Activated T-helper 2 cell treated with anti-CD3 and anti-CD28 coated beads, Interferon-gamma antibody, Interleukin-2, Interleukin-4, amounts not matched to agents 10 μg/mL and 5 μg/mL and 100 μg/mL, durations not matched to agents 14 hours and 24 hours and 36 hours (primary cell): ENCODE measurements at regions of chr14 and their contacts with region 1.

Region 1: GRCh38 chr14:60248697-60249318 is at the start of gene PPM1A:
- DNase-seq: peak; percentile 91
- H3K4me3 Mint-ChIP-seq: peak within 1 kb of the TSS; percentile 95
- H3K27ac Mint-ChIP-seq: peak within 1 kb of the TSS; percentile 100
- H3K4me1 Mint-ChIP-seq: peaks cover 47% of the 10 kb centered on the region
- H3K27me3 Mint-ChIP-seq: no peaks in the 10 kb centered on the region
- total RNA-seq, gene PPM1A: 45.7 and 48.2 TPM in 2 replicates

Region 2: GRCh38 chr14:59189786-59190771 is 1058.7 kb before region 1 on chr14:
- intact Hi-C with region 1: loop called (anchors 2 kb)
- DNase-seq: peak; percentile 79
- H3K4me3 Mint-ChIP-seq: peak overlapping the region; percentile 95
- H3K27ac Mint-ChIP-seq: peak overlapping the region; percentile 61
- H3K4me1 Mint-ChIP-seq: peaks cover 17% of the 10 kb centered on the region
- H3K27me3 Mint-ChIP-seq: peaks cover 13% of the 10 kb centered on the region

Region 3: GRCh38 chr14:60164712-60165546 is 83.9 kb before region 1 on chr14 and contains the start of gene DHRS7:
- intact Hi-C with region 1: loop called (anchors 2 kb)
- DNase-seq: peak; percentile 58
- H3K4me3 Mint-ChIP-seq: peak within 1 kb of the TSS; percentile 94
- H3K27ac Mint-ChIP-seq: peak within 1 kb of the TSS; percentile 95
- H3K4me1 Mint-ChIP-seq: peaks cover 25% of the 10 kb centered on the region
- H3K27me3 Mint-ChIP-seq: no peaks in the 10 kb centered on the region
- total RNA-seq, gene DHRS7: 52.9 and 55.8 TPM in 2 replicates

Region 4: GRCh38 chr14:60204843-60205774 is 43.7 kb before region 1 on chr14:
- intact Hi-C with region 1: loop called (anchors 5 kb)
- DNase-seq: no peak
- H3K4me3 Mint-ChIP-seq: no peak overlapping the region
- H3K27ac Mint-ChIP-seq: no peak overlapping the region
- H3K4me1 Mint-ChIP-seq: peaks cover 19% of the 10 kb centered on the region
- H3K27me3 Mint-ChIP-seq: peaks cover 10% of the 10 kb centered on the region

Region 5: DNA sequence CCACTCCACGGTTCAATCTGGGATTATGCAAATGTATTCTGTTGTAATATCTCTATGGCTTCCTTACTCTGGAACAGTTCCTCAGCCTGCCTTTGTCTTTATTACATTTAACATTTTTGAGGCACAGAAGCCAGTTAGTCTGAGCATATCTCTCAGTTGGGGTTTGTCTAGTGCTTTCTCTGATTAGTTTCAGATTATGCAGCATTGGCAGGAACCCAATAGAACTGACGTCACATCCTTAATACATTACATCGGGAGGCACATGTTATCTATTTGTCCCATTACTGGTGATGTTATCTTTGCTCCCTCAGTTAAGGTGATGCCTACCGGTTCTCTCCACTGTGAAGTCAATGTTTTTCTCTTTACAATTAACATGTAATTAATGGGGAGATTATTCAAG is 62.6 kb after region 1 on chr14:
- intact Hi-C with region 1: no loop called
- DNase-seq: no peak
- H3K4me3 Mint-ChIP-seq: no peak overlapping the region
- H3K27ac Mint-ChIP-seq: no peak overlapping the region
- H3K4me1 Mint-ChIP-seq: no peaks in the 10 kb centered on the region
- H3K27me3 Mint-ChIP-seq: peaks cover 10% of the 10 kb centered on the region

Region 6: DNA sequence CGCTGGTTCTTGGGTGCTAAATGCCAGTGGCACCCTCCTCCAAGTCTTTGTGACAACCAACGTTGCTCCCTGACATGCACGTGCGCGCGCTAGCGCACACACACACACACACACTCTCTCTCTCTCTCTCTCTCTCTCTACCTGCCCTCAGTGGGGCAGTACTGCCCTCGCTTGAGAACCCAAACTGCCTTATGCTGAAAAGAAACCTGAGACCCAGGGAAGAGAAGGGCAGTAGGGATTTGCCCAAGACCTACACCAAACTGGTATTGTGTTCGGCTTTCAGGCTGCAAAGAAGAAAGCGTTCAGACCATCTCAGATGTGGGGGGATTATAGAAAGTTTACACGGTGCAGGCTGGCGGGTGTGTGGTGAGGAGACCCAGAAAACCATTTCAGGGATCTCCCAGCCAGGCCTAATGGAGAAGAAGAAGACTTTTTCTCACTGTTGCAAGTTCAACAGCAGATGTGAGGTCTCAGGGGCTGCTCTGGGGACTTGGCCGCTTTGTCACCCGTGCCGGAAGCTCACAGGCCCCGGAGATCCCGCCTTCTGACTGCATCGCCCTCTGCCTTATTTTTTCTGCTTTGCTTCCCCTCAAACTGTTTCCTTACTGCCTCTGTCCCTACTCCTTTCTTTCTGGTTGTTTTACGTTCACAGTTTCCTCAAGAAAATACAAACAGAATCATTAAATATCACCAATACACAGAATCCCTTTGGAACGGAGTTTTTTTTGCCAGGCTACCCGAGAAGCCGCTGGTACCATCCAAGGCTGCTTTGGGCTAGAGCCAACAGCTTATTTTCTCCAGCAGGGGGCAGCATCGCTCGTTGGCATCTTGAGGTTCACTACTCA is 82.6 kb after region 1 on chr14:
- intact Hi-C with region 1: loop called (anchors 2 kb)
- DNase-seq: peak; percentile 61
- H3K4me3 Mint-ChIP-seq: peak overlapping the region; percentile 86
- H3K27ac Mint-ChIP-seq: peak overlapping the region; percentile 90
- H3K4me1 Mint-ChIP-seq: peaks cover 34% of the 10 kb centered on the region
- H3K27me3 Mint-ChIP-seq: peaks cover 46% of the 10 kb centered on the region

Region 7: DNA sequence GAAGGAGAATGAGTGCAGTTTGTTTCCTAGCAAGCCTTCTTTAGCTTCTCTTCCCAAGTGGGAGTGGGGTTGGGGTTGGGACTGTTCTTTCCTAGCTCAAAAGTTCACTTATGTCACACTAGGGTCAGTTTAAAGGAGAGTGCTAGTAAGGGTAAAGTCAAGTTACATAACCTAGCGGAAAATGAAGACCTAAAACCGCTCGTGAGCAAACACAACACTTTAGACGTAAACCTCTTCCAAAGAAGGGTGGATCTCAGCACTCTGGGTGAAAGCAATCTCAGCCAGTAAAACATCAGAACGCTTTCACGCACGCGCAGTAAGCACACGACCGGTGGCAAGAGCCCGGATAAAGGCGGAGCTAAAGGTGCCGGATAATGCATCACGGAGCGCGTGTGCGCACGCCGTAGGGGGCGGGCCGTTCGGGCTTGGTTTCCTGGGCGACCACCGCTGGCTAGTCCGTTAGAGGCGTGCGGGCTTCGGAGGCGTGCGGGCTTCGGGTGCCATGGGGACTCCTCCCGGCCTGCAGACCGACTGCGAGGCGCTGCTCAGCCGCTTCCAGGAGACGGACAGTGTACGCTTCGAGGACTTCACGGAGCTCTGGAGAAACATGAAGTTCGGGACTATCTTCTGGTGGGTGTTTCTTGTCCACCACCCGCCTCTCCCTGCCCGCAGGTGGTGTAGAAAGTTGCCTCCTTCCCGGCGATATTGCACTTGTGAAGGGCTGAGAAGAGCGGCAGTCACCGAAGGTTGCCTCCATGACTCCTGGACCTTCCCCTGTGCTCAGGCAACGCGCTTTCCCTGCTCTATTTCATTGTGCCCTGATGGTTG is 1513.4 kb after region 1 on chr14 and contains the start of gene SNAPC1:
- intact Hi-C with region 1: loop called (anchors 2 kb)
- DNase-seq: peak; percentile 98
- H3K4me3 Mint-ChIP-seq: peak within 1 kb of the TSS; percentile 94
- H3K27ac Mint-ChIP-seq: peak within 1 kb of the TSS; percentile 93
- H3K4me1 Mint-ChIP-seq: peaks cover 36% of the 10 kb centered on the region
- H3K27me3 Mint-ChIP-seq: peaks cover 3% of the 10 kb centered on the region
- total RNA-seq, gene SNAPC1: 10.2 and 10.5 TPM in 2 replicates